PC-9 (cell line): ENCODE measurements at regions of chr1 and their contacts with region 1.

Region 1: GRCh38 chr1:6026095-6026809 is 19.4 kb upstream of the KCNAB2 start:
- DNase-seq: peak; percentile 74 to 93
- H3K4me3 ChIP-seq: peak overlapping the region; percentile 43; the same call in 1 of the 2 replicates
- H3K27ac ChIP-seq: no peak overlapping the region
- H3K4me1 ChIP-seq: peaks cover 11% of the 10 kb centered on the region
- H3K27me3 ChIP-seq: no peaks in the 10 kb centered on the region
- CTCF ChIP-seq: no peak

Region 2: DNA sequence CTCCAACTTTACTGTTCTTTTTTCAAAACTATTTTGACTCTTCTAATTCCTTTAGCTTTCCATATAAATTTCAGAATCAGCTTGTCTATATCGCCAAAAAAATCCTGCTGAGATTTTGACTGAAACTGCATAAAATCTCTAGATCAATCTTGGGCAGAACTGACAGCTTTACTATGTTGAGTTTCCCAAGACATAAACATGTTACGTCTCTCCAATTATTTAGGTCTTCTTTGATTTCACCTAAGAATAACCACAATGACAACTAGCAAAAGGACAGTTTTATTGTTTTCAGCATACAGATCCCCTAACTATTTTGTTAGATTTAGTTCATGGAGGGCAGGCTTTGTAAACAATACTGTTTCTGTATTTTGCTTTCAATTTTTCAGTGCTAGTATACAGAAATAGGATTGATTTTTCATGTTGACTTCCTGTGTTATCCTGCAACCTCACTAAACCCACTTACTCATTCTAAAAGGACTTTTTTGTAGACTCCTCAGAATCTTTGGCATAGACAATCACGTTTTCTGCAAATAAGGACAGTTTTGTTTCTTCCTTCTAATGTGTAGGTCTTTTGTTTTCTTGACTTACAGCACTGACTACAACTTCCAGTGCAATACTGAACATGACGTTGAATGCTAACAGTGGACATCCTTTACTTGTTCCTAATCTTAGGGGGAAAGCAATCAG is 97.4 kb before region 1 on chr1:
- CTCF ChIA-PET with region 1: interaction called, 13 read pairs
- POLR2A ChIA-PET with region 1: no interaction called
- intact Hi-C with region 1: no loop called
- DNase-seq: no peak
- H3K4me3 ChIP-seq: no peak overlapping the region
- H3K27ac ChIP-seq: no peak overlapping the region
- H3K4me1 ChIP-seq: no peaks in the 10 kb centered on the region
- H3K27me3 ChIP-seq: no peaks in the 10 kb centered on the region
- CTCF ChIP-seq: no peak

Region 3: DNA sequence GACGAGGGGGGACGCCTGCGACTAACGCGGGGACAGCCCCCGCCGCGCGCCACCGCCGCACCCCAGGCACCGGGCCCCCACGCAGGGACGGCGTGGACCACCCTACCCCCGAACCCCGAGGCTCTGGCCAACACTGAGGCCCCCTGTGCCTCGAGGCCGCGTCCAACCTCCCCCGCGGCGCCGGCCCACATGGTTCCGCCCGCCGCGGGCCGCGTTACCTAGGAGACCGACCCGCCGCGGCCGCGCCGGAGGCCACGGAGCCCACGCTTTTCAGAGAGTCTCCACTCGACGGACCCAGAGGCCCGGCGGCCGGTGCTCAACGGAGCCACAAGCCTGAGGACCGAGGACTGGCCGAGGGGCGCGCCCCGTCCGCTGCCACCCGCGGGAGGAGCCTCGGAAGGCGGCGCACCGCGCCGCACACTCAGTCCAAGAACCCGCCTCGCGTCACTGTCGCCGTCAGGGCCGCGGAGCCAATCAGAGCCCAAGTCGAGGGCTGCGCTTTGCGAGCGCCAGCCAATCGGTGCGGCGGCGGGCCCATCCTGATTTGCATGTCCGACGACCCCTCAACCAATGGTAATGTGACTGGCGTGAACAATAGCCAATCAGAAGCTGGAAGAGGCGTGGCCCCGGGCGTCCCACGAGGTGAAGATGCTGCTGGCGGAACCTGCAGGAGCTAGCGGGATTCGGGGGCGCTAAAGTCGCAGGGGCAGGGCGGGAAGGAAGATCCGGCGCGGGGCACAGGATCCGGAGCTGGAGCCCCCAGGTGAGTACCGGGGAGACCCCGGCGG is 34.0 kb before region 1 on chr1 and contains the start of gene NPHP4:
- CTCF ChIA-PET with region 1: no interaction called
- POLR2A ChIA-PET with region 1: no interaction called
- intact Hi-C with region 1: loop called (anchors 1 kb)
- DNase-seq: peak; percentile 95 to 98
- H3K4me3 ChIP-seq: peak within 1 kb of the TSS; percentile 85
- H3K27ac ChIP-seq: no peak within 1 kb of the TSS
- H3K4me1 ChIP-seq: 0 out of 2 replicates have a peak, but pooled peaks cover 4% of the 10 kb centered on the region
- H3K27me3 ChIP-seq: no peaks in the 10 kb centered on the region
- CTCF ChIP-seq: no peak
- total RNA-seq, gene NPHP4: 17.9 and 21.5 TPM in 2 replicates

Region 4: GRCh38 chr1:6672558-6672957 is 646.3 kb after region 1 on chr1:
- CTCF ChIA-PET with region 1: no interaction called
- POLR2A ChIA-PET with region 1: no interaction called
- intact Hi-C with region 1: loop called (anchors 10 kb)
- DNase-seq: no peak
- H3K4me3 ChIP-seq: no peak overlapping the region
- H3K27ac ChIP-seq: no peak overlapping the region
- H3K4me1 ChIP-seq: no peaks in the 10 kb centered on the region
- H3K27me3 ChIP-seq: no peaks in the 10 kb centered on the region
- CTCF ChIP-seq: no peak